ENCODE measurements at regions of chr4 and their contacts with region 1.

Region 1: DNA sequence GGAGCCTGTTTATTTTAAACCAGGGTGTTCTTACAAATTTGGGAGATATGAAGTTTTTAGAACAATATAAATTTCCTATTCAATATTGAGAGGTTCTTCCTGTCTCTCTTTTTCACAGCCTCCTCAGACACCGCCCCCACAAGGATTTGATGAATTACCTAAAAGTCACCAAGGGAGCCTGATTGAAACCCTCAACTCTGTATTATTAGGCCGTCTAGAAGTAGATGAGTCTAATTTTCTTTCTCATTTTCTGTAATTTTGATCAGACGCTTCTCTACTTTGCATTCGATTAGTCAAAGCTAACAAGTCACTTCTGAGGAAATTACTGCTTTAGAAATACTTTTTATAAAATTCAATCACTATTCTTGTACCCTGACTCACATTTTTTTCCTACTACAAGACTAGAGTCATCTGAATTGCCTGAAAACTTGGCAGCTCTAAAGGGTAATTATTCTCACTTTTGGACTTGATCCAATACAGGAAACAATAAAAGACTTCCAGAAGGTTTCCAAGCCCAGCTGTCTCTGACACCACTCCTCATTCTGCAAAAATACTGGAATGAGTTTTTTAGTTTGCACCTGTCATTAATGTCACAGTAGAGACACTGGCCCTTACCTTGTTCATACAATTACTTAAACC is 111.2 kb downstream of the ELOVL6 start:
- DNase-seq: peak; percentile 51
- ATAC-seq: no peak
- H3K4me3 ChIP-seq: no peak overlapping the region
- H3K27ac ChIP-seq: peak overlapping the region; percentile 49; the same call in 1 of the 2 replicates
- H3K4me1 ChIP-seq: peaks cover 46 to 71% of the 10 kb centered on the region in 2 experiments
- H3K27me3 ChIP-seq: no peaks in the 10 kb centered on the region
- CTCF ChIP-seq: no peak
- POLR2A ChIP-seq: no peak
- RAD21 ChIP-seq: peak; percentile 14; the same call in 1 of the 2 replicates

Region 2: GRCh38 chr4:110165382-110166285 is 78.4 kb after region 1 on chr4:
- CTCF ChIA-PET with region 1: no interaction called
- POLR2A ChIA-PET with region 1: no interaction called
- RAD21 ChIA-PET with region 1: no interaction called
- intact Hi-C with region 1: loop called (anchors 5 kb)
- DNase-seq: peak; percentile 31
- ATAC-seq: peak; percentile 48; the same call in 1 of the 2 replicates
- H3K4me3 ChIP-seq: no peak overlapping the region
- H3K27ac ChIP-seq: peak overlapping the region; percentile 79; the same call in 1 of the 2 replicates
- H3K4me1 ChIP-seq: peaks cover 35 to 44% of the 10 kb centered on the region in 2 experiments
- H3K27me3 ChIP-seq: no peaks in the 10 kb centered on the region
- CTCF ChIP-seq: no peak
- POLR2A ChIP-seq: no peak
- RAD21 ChIP-seq: no peak

Measured in HCT116 (cell line).